ENCODE measurements at regions of chr17 and their contacts with region 1.

Region 1: DNA sequence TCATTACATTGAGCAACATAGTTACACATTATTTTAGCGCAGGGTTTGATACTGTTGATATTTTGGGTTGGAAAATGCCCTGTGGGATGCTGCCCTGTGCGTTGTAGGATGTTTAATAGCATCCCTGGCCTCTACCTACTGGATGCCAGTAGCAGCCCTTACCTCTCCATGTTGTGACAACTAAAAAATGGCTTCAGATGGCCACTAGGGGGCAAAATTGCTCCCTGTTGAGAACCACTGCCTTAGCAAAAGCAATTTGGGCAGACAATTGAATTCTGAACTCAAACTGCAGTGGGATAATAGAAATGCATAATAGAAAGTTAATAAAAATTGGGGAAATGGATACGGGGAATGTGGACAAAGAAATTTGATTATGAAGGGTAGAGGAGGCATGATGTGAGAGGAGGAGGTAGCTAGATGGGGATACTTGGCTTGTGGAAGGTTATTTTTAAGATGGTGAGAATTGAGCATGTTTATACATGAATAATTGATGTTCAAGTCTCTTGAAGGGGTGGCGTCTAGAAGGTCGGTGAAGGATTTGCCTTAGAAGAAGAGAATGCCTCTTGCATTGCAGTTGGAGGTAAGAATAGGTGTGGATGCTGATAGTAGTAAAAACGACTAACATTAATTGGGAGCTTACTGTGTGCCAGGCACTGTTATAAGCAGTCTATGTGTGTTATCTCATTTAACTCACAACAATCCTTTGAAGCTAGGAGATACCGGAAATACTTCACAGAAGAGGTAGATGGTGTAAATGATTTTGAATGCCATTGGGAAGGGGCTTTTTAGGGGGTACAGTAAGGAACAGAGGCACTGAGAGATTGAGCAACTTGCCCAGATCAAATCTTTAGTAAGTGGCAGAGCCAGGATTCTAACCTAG is 19.0 kb downstream of the HEATR9 start:
- DNase-seq: peak; percentile 67
- H3K4me3 ChIP-seq: no peak overlapping the region
- H3K27ac ChIP-seq: no peak overlapping the region
- H3K4me1 ChIP-seq: no peaks in the 10 kb centered on the region
- CTCF ChIP-seq: peak; percentile 96

Region 2: GRCh38 chr17:35764123-35764991 is 85.4 kb before region 1 on chr17:
- CTCF ChIA-PET with region 1: no interaction called
- POLR2A ChIA-PET with region 1: no interaction called
- intact Hi-C with region 1: loop called (anchors 5 kb)
- DNase-seq: peak; percentile 93
- H3K4me3 ChIP-seq: peak overlapping the region; percentile 68
- H3K27ac ChIP-seq: peak overlapping the region; percentile 61
- H3K4me1 ChIP-seq: peaks cover 9% of the 10 kb centered on the region
- CTCF ChIP-seq: peak; percentile 81

Region 3: DNA sequence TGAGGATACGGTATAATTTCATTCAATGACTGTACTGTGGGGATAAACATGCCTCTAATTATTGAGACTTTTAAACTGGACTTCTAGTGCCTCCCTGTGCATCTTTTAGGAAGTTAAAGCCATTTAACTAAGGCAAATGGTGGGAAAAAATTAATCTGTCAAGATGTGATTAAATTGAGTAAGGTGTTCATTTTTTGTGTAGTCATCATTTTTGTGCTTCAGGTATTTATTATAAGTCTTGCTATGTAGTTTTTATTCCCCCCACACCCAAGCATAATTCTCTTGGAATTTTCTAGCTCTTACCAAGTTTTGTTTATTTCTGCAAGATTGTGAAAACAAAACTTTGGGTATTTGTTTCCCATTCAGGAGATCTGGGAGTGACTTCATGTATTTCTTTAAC is 30.3 kb before region 1 on chr17:
- CTCF ChIA-PET with region 1: no interaction called
- POLR2A ChIA-PET with region 1: no interaction called
- intact Hi-C with region 1: no loop called
- DNase-seq: no peak
- H3K4me3 ChIP-seq: no peak overlapping the region
- H3K27ac ChIP-seq: no peak overlapping the region
- H3K4me1 ChIP-seq: no peaks in the 10 kb centered on the region
- CTCF ChIP-seq: no peak

Measured in OCI-LY7 (cell line).